MCF 10A (cell line): ENCODE measurements at regions of chr15 and their contacts with region 1.

Region 1: GRCh38 chr15:60585743-60586708 is 107.1 kb upstream of the ICE2 start:
- DNase-seq: peak; percentile 75
- H3K4me3 Mint-ChIP-seq: no peak overlapping the region
- H3K27ac Mint-ChIP-seq: no peak overlapping the region
- H3K4me1 Mint-ChIP-seq: no peaks in the 10 kb centered on the region
- H3K27me3 Mint-ChIP-seq: no peaks in the 10 kb centered on the region
- CTCF ChIP-seq: peak; percentile 84

Region 2: GRCh38 chr15:60649845-60650548 is 64.0 kb after region 1 on chr15:
- CTCF ChIA-PET with region 1: no interaction called
- POLR2A ChIA-PET with region 1: no interaction called
- intact Hi-C with region 1: no loop called
- DNase-seq: no peak
- H3K4me3 Mint-ChIP-seq: no peak overlapping the region
- H3K27ac Mint-ChIP-seq: no peak overlapping the region
- H3K4me1 Mint-ChIP-seq: peaks cover 10% of the 10 kb centered on the region
- H3K27me3 Mint-ChIP-seq: no peaks in the 10 kb centered on the region
- CTCF ChIP-seq: no peak

Region 3: DNA sequence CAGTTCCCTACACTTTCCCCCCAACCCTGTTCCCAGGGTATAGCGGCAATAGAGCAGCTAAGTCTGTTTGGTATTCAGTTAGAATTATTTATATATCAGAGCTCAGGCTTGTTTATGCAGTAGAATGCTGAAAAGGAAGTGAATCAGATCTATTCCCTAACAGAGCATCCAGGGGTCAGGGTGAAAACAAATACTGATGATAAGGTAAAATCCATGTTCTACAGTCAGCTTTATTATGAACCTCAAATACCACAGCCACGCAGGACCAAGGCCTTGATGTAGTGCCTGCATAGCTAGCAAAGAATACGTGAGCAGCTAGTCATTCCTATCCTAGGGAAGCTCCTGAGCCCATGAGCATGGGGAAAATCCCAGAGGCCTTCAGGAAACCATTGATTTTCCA is 122.7 kb after region 1 on chr15:
- CTCF ChIA-PET with region 1: no interaction called
- POLR2A ChIA-PET with region 1: no interaction called
- intact Hi-C with region 1: no loop called
- DNase-seq: no peak
- H3K4me3 Mint-ChIP-seq: no peak overlapping the region
- H3K27ac Mint-ChIP-seq: no peak overlapping the region
- H3K4me1 Mint-ChIP-seq: peaks cover 6% of the 10 kb centered on the region
- H3K27me3 Mint-ChIP-seq: no peaks in the 10 kb centered on the region
- CTCF ChIP-seq: no peak

Region 4: GRCh38 chr15:60859996-60860494 is 274.0 kb after region 1 on chr15:
- CTCF ChIA-PET with region 1: interaction called, 3 read pairs
- POLR2A ChIA-PET with region 1: no interaction called
- intact Hi-C with region 1: loop called (anchors 1 kb)
- DNase-seq: peak; percentile 84
- H3K4me3 Mint-ChIP-seq: no peak overlapping the region
- H3K27ac Mint-ChIP-seq: no peak overlapping the region
- H3K4me1 Mint-ChIP-seq: peaks cover 6% of the 10 kb centered on the region
- H3K27me3 Mint-ChIP-seq: peaks cover 30% of the 10 kb centered on the region
- CTCF ChIP-seq: no peak

Region 5: DNA sequence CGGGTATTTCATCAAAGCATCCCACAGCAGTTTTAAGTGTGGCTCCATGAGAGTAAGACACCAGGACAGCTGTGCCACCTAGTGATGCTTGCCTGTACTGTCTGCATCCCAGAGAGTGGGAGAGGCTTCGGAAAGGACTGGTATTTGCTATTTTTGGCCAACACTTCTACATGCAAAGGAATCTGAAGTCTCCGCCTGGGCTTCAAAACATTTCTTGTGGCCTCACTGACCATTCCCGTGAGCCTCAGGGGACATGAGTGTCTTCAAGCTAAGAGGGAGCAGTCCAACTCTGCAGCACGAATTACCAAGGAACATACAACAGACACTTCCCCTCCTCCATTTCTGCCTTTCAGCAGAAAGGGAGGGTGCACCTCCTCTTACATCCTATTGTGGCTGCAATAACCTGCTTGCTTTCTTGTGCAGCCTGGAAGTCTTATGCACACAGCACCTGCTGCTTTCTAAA is 465.6 kb after region 1 on chr15:
- CTCF ChIA-PET with region 1: interaction called, 6 read pairs
- POLR2A ChIA-PET with region 1: no interaction called
- intact Hi-C with region 1: loop called (anchors 1 kb)
- DNase-seq: peak; percentile 58
- H3K4me3 Mint-ChIP-seq: no peak overlapping the region
- H3K27ac Mint-ChIP-seq: no peak overlapping the region
- H3K4me1 Mint-ChIP-seq: peaks cover 23% of the 10 kb centered on the region
- H3K27me3 Mint-ChIP-seq: no peaks in the 10 kb centered on the region
- CTCF ChIP-seq: peak; percentile 56

Region 6: DNA sequence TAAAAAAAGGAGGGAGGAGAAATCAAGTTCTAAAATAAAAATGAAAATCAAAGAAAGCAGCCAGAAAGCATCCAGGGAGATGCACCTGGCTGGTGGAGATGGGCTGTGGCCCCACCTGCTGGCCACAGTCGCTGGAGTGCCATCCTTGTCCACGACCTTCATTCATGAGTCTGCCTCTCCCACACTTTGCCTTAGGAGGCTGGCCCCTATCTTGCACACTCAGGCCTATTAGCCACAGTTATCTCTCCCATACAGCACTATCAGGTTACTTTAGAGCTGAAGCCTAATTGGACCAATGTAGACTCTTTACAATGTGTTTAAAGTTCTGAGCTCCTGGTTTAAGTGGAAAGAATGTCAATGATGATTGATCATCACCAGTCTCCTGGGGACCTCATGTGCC is 1035.1 kb after region 1 on chr15:
- CTCF ChIA-PET with region 1: no interaction called
- POLR2A ChIA-PET with region 1: no interaction called
- intact Hi-C with region 1: loop called (anchors 5 kb)
- DNase-seq: peak; percentile 49
- H3K4me3 Mint-ChIP-seq: no peak overlapping the region
- H3K27ac Mint-ChIP-seq: no peak overlapping the region
- H3K4me1 Mint-ChIP-seq: no peaks in the 10 kb centered on the region
- H3K27me3 Mint-ChIP-seq: no peaks in the 10 kb centered on the region
- CTCF ChIP-seq: peak; percentile 53